ENCODE measurements at regions of chrX and their contacts with region 1.

Region 1: DNA sequence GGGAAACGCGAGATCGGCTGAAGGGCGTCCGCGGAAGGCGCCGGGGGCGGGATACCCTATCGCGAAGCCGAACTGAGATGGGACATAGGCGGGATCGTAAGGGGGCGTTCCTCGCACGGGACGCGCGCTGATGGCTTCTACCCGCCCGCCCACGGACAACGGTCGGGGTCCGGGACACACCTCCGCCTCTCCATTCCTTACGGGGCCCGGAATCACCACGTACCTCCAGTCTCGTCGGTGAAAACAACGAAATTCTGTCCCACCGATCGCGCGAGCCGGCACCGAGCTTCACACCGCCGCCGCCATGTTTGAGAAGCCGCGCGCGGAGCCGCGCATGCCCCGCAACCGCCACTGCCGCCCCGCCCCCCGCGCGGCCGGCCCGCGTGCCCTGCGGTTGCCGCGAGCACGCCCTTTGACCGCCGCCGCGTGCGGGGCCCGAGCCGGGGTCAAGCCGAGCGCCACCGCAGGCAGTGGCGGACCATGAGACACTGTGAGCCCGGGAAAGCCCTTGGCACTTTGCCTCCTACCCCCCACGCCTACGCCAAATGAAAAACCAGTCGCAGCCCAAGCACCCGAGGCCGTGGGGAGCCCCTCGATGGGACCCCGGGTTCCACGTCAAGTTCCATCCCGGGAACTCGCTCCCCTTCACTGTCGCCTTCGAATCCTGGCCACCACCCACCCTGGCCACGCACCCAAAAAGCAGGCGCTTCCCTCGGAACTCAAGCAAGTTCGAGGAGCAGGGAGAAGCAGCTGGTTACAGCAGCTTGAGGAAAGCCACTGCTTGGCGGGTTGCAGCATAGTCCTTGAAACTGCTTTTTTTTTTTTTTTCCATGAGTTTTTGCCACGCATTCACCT is at the start of gene SCML2:
- DNase-seq: peak; percentile 41
- H3K4me3 ChIP-seq: peak within 1 kb of the TSS; percentile 43 to 66 (median 48)
- H3K27ac ChIP-seq: peak within 1 kb of the TSS; percentile 32 to 65 (median 50)
- H3K4me1 ChIP-seq: peaks cover 0 to 5% (median 2%) of the 10 kb centered on the region in 4 donors
- H3K27me3 ChIP-seq: no peaks in the 10 kb centered on the region
- CTCF ChIP-seq: no peak
- EP300 ChIP-seq: no peak
- POLR2A ChIP-seq: no peak
- total RNA-seq, gene SCML2: 1.1 to 15.9 (median 1.4) TPM

Region 2: DNA sequence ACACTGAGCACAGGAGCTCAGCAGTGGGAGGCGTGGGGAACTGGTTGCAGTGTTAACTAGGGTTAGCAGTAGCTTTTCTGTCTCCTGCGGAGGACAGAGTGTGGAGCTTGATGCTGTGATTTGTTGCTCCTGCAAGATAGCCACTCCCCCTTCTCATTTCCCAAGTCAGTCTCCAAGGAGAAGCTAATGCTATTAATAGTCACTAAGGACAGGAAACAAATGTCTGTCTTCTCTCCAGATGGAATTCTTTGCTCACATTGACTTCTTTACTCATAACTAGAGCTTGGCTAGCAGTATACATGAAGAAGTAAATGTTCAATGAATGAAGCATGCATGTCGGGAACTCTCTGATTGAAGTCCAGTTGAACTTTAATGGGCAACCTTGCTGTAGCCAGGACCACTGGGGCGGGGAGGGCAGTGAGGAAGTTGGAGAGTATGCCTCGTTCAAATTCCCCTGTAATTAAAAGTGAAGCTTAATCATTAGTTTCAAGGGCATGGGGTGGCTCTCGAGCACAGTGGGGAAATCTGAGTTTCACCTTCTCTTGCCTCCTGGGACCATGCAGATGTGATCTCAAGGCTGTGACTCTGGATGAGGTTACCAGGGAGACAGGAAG is 774.0 kb before region 1 on chrX:
- in situ Hi-C with region 1: no loop called
- intact Hi-C with region 1: loop called (anchors 5 kb)
- DNase-seq: no peak
- H3K4me3 ChIP-seq: no peak overlapping the region
- H3K27ac ChIP-seq: peak overlapping the region in 3 of 4 donors; percentile 23 to 54 (median 40)
- H3K4me1 ChIP-seq: peaks cover 0 to 9% (median 0%) of the 10 kb centered on the region in 4 donors
- H3K27me3 ChIP-seq: no peaks in the 10 kb centered on the region
- CTCF ChIP-seq: no peak
- EP300 ChIP-seq: no peak
- POLR2A ChIP-seq: no peak

Region 3: GRCh38 chrX:18116236-18116635 is 238.4 kb before region 1 on chrX:
- in situ Hi-C with region 1: no loop called
- intact Hi-C with region 1: no loop called
- DNase-seq: no peak
- H3K4me3 ChIP-seq: no peak overlapping the region
- H3K27ac ChIP-seq: no peak overlapping the region
- H3K4me1 ChIP-seq: no peaks in the 10 kb centered on the region
- H3K27me3 ChIP-seq: no peaks in the 10 kb centered on the region
- CTCF ChIP-seq: no peak
- EP300 ChIP-seq: no peak
- POLR2A ChIP-seq: no peak

Region 4: GRCh38 chrX:18173494-18174180 is 181.0 kb before region 1 on chrX:
- in situ Hi-C with region 1: no loop called
- intact Hi-C with region 1: no loop called
- DNase-seq: no peak
- H3K4me3 ChIP-seq: no peak overlapping the region
- H3K27ac ChIP-seq: no peak overlapping the region
- H3K4me1 ChIP-seq: no peaks in the 10 kb centered on the region
- H3K27me3 ChIP-seq: no peaks in the 10 kb centered on the region
- CTCF ChIP-seq: no peak
- EP300 ChIP-seq: no peak
- POLR2A ChIP-seq: no peak

Region 5: GRCh38 chrX:18490806-18491555 is 136.4 kb after region 1 on chrX:
- in situ Hi-C with region 1: no loop called
- intact Hi-C with region 1: no loop called
- DNase-seq: no peak
- H3K4me3 ChIP-seq: no peak overlapping the region
- H3K27ac ChIP-seq: no peak overlapping the region
- H3K4me1 ChIP-seq: no peaks in the 10 kb centered on the region
- H3K27me3 ChIP-seq: no peaks in the 10 kb centered on the region
- CTCF ChIP-seq: no peak
- EP300 ChIP-seq: no peak
- POLR2A ChIP-seq: no peak

Measured in transverse colon (tissue), 4 donors.